Endothelial cell of umbilical vein (primary cell): ENCODE measurements at regions of chr1 and their contacts with region 1.

Region 1: GRCh38 chr1:37595440-37596319 is at the start of gene GNL2:
- DNase-seq: peak; percentile 97
- H3K4me3 ChIP-seq: peak within 1 kb of the TSS; percentile 54 to 89 (median 75)
- H3K27ac ChIP-seq: peak within 1 kb of the TSS; percentile 76
- H3K4me1 ChIP-seq: peaks cover 17% of the 10 kb centered on the region
- H3K27me3 ChIP-seq: peaks cover 0 to 6% of the 10 kb centered on the region in 2 experiments
- CTCF ChIP-seq: no peak
- POLR2A ChIP-seq: peak; percentile 87
- total RNA-seq, gene GNL2: 55.5 and 57.1 TPM in 2 replicates

Region 2: GRCh38 chr1:37479255-37480124 is 116.2 kb before region 1 on chr1:
- CTCF ChIA-PET with region 1: no interaction called
- POLR2A ChIA-PET with region 1: no interaction called
- dilution Hi-C with region 1: no loop called
- intact Hi-C with region 1: loop called (anchors 5 kb)
- DNase-seq: peak; percentile 76
- H3K4me3 ChIP-seq: peak overlapping the region in 2 of 3 experiments; percentile 3 to 54
- H3K27ac ChIP-seq: peak overlapping the region; percentile 82
- H3K4me1 ChIP-seq: peaks cover 54% of the 10 kb centered on the region
- H3K27me3 ChIP-seq: no peaks in the 10 kb centered on the region
- CTCF ChIP-seq: no peak
- POLR2A ChIP-seq: no peak

Region 3: GRCh38 chr1:37561133-37562132 is 34.2 kb before region 1 on chr1:
- CTCF ChIA-PET with region 1: interaction called, 3 read pairs
- POLR2A ChIA-PET with region 1: no interaction called
- dilution Hi-C with region 1: no loop called
- intact Hi-C with region 1: loop called (anchors 1 kb)
- DNase-seq: peak; percentile 15
- H3K4me3 ChIP-seq: no peak overlapping the region
- H3K27ac ChIP-seq: no peak overlapping the region
- H3K4me1 ChIP-seq: peaks cover 10% of the 10 kb centered on the region
- H3K27me3 ChIP-seq: no peaks in the 10 kb centered on the region
- CTCF ChIP-seq: peak; percentile 49 to 55
- POLR2A ChIP-seq: no peak